ENCODE measurements at regions of chr5 and their contacts with region 1.

Region 1: GRCh38 chr5:138752951-138753793 is at the start of gene CTNNA1:
- DNase-seq: peak; percentile 83 to 88
- ATAC-seq: peak; percentile 80 to 89 (median 82)
- H3K4me3 ChIP-seq: peak within 1 kb of the TSS; percentile 44 to 100 (median 98)
- H3K27ac ChIP-seq: peak within 1 kb of the TSS; percentile 96 to 100 (median 100)
- H3K4me1 ChIP-seq: peaks cover 10 to 47% (median 39%) of the 10 kb centered on the region in 9 donors
- H3K27me3 ChIP-seq: no peaks in the 10 kb centered on the region
- CTCF ChIP-seq: no peak
- total RNA-seq, gene CTNNA1: 337 to 416 (median 382) TPM

Region 2: DNA sequence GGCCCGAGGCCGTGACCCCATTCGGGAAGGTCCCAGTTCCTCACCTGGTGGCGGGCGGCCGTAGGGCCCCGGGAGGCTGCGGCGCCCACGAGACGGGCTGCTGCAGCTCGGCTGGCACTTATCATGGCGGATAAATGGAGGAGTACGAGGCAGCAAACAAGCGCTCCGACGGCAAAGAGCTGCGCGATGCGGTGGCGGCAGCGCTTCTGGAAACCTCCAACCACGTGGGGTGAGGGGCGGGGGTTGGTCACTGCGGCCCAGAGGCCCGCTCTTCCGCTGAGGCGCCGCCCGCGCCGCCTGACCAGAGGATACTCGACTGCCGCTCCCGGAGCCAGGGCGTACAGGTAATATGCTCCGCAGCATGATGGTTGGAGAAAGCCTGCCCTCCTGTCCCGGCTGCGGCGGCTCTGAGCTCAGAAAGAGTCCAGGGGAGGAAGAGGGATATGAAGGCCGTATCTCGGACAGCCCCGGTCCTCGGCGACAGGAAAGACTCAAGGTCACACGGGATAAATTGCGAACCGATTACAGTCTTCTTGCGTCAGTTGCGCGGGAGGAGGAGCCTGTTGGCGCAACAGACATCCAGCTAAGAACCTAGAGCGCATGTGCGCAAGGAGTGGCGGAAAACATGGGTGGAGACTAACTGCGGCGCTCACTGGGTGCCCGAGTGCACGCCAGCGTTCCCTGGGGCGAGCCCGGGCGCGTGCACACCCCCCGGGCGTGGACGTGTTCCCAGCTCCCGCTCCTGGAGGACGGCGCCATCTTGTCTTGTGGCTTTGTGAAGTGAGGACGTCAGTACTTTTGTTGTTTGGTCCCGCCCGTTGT is 177.8 kb before region 1 on chr5 and contains the start of gene HSPA9:
- intact Hi-C with region 1: loop called in 2 of 10 experiments (anchors 5 to 10 kb)
- DNase-seq: peak; percentile 96 to 99
- ATAC-seq: peak; percentile 96 to 98 (median 97)
- H3K4me3 ChIP-seq: peak within 1 kb of the TSS; percentile 69 to 98 (median 86)
- H3K27ac ChIP-seq: peak within 1 kb of the TSS; percentile 93 to 99 (median 98)
- H3K4me1 ChIP-seq: peaks cover 0 to 38% (median 20%) of the 10 kb centered on the region in 9 donors
- H3K27me3 ChIP-seq: no peaks in the 10 kb centered on the region
- CTCF ChIP-seq: peak in 2 of 9 donors; percentile 9 to 17
- total RNA-seq, gene HSPA9: 246 to 415 (median 324) TPM

Region 3: GRCh38 chr5:138641547-138642298 is 111.4 kb before region 1 on chr5:
- intact Hi-C with region 1: loop called in 1 of 10 experiments (anchors 10 kb)
- DNase-seq: peak; percentile 68 to 74
- ATAC-seq: peak in 7 of 8 donors; percentile 58 to 84 (median 69)
- H3K4me3 ChIP-seq: no peak overlapping the region
- H3K27ac ChIP-seq: no peak overlapping the region
- H3K4me1 ChIP-seq: peaks cover 0 to 5% (median 0%) of the 10 kb centered on the region in 9 donors
- H3K27me3 ChIP-seq: peaks cover 0 to 9% (median 0%) of the 10 kb centered on the region in 7 donors
- CTCF ChIP-seq: peak; percentile 67 to 89 (median 78)

Region 4: DNA sequence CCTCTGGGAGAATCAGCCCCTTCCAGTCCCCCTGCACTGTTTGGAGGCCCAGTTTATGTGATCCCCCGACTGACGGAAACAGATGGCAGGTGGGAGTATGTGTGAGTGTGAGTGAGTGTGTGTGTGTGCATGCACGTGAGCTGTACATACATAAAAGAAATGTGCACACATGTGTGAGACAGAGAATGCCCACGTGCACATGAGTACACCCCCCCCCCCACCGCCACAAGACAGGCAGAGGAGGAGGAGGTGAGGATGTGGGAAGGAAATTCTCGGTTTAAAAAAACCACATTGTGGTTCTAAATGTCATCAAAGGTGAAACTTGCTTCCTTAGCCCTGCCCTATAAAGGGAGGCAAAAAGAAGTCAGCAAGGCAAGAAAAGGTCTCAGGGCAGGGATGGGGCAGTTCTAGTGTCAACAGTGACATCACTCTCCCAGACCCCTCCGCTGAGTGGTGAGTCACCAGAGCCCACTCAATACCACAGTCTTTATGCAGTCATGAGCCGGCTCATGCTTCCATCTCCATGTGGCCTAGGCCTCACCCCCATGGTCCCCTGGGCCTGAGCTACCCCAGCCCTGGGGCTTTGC is 98.8 kb before region 1 on chr5:
- intact Hi-C with region 1: loop called in 2 of 10 experiments (anchors 10 kb)
- DNase-seq: no peak
- ATAC-seq: peak in 1 of 8 donors; percentile 30
- H3K4me3 ChIP-seq: no peak overlapping the region
- H3K27ac ChIP-seq: peak overlapping the region in 1 of 10 donors; percentile 1
- H3K4me1 ChIP-seq: peaks cover 0 to 18% (median 12%) of the 10 kb centered on the region in 9 donors
- H3K27me3 ChIP-seq: peaks cover 0 to 82% (median 0%) of the 10 kb centered on the region in 7 donors
- CTCF ChIP-seq: no peak

Region 5: DNA sequence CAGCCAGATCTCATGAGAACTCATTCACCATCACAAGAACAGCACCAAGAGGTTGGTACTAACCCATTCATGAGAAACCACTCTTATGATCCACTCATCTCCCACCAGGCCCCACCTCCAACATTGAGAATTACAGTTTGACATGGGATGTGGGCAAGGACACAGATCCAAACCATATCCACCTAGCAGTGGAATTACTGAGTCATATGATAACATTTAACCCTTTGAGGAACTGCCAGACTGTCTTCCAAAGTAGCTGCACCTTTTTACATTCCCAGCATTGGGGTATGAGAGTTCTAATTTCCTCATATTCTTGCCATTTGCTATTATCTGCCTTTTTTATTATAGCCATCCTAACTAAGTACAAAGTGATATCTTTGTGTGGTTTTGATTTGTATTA is 51.9 kb after region 1 on chr5:
- intact Hi-C with region 1: no loop called
- DNase-seq: no peak
- ATAC-seq: no peak
- H3K4me3 ChIP-seq: no peak overlapping the region
- H3K27ac ChIP-seq: no peak overlapping the region
- H3K4me1 ChIP-seq: peaks cover 0 to 57% (median 19%) of the 10 kb centered on the region in 9 donors
- H3K27me3 ChIP-seq: no peaks in the 10 kb centered on the region
- CTCF ChIP-seq: no peak

Region 6: GRCh38 chr5:138975098-138975847 is 222.1 kb after region 1 on chr5:
- intact Hi-C with region 1: loop called in 1 of 10 experiments (anchors 10 kb)
- DNase-seq: peak; percentile 26 to 73
- ATAC-seq: peak; percentile 28 to 72 (median 42)
- H3K4me3 ChIP-seq: no peak overlapping the region
- H3K27ac ChIP-seq: peak overlapping the region; percentile 77 to 93 (median 82)
- H3K4me1 ChIP-seq: peaks cover 15 to 54% (median 44%) of the 10 kb centered on the region in 9 donors
- H3K27me3 ChIP-seq: no peaks in the 10 kb centered on the region
- CTCF ChIP-seq: no peak